HAP-1 (cell line): ENCODE measurements at regions of chr14 and their contacts with region 1.

Region 1: DNA sequence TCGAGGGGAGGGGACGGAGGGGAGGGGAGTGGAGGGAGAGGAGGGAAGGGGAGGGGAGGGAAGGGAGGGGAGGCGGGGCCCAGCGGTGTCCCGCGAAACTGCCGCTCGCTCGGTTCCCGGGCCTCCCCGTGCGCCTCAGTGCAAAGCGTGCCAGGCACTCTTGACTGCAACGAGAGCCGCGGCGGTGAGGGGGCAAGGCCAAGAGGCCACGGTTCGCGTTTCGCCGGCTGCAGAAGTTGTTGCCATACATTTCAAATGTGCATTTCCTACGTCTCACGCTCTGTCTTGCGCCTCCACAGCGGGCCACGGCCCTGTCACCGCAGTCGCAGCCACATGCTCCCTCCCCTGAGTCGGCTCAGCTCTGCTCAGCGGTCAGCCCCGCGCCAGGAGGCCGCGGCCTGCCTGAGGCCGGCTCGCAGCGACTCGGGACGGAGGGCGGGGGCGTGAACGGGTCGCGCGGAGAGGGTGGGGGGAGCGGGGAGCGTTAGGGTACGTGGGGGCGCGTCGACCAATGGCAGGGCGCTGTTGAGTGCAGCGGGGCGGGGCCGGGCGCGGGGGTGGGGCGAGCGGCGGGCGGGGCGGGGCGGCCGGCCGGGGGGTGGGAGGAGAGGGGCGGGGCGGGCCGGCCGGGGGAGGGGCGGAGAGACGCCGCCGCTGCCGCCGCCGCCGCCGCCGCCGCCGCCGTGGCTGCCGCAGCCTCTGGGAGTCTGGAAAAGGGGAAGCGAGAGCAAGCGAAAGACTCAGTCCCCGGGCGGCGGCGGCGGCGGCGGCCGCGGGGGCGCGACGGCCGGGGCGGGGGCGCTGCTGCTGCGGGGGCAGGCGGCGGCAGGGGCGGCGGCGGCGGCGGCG is at the start of gene PPP2R5C:
- DNase-seq: peak; percentile 73 to 95
- H3K4me3 ChIP-seq: peak within 1 kb of the TSS; percentile 63
- H3K4me1 ChIP-seq: peaks cover 7% of the 10 kb centered on the region
- H3K27me3 ChIP-seq: no peaks in the 10 kb centered on the region; the same call in 1 of the 2 replicates

Region 2: DNA sequence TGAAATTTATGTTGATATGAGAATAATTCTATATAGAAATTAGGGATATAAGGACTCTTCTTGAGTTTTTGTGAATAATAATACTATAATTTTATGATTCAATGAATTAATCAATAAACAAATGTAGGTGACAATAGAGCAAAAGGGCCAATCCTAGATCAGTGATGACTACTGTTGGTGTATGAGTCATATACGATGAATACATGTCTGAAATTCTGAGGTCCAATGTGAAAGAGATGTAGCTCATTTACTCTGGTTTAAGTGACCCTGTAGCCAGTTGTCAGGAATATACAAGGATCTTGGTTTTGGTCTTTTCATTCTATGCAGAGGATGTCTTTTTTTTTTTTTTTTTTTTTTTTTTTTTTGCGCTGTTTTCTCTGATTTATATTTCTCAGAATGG is 785.6 kb before region 1 on chr14:
- in situ Hi-C with region 1: no loop called
- DNase-seq: no peak
- H3K4me3 ChIP-seq: no peak overlapping the region
- H3K4me1 ChIP-seq: no peaks in the 10 kb centered on the region
- H3K27me3 ChIP-seq: no peaks in the 10 kb centered on the region

Region 3: DNA sequence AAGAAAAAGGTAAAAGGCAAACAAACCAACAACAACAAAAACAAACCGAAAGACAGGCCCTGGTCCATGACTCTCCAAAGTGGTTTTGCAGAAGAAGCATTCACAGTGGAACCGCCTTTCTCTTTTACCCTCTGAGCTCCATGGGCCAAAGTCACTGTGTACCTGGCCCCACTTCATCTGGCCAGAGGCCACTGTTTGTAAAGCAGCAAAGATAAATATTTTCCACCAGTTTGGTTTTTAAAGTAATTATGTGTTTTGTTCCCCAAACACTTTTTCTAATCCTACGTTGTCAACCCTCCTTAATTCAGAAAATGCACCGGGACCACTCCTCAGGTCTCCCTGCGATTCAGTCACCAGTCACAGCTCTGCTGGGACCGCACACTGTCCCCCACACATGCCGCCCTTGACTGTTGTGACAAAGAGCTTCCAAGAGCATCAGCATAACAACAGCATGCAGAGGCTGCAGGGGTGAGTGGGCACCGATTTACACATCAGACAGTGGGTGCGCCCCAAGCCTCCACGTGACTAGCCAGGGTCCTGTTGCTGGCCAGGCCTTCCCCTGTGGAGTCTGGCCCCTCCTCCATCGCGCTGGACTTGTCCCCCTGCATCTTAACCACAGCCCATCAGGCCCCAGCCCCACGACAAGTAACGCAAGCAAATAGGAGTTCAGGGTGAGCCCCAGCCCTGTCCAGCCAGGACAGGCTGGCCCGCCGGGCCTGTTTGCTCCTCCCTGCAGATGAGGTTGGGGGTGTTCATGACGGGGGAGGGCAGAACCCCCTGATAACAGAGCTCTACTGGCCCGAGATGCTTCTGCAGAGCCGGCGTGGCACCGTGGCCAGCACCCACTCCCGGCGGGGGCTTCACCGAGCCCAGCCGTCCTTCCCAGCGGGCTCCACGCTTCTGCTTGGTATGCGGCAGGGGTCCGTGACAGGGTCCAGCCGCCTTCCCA is 265.2 kb before region 1 on chr14:
- in situ Hi-C with region 1: no loop called
- DNase-seq: no peak
- H3K4me3 ChIP-seq: no peak overlapping the region
- H3K4me1 ChIP-seq: no peaks in the 10 kb centered on the region
- H3K27me3 ChIP-seq: no peaks in the 10 kb centered on the region

Region 4: DNA sequence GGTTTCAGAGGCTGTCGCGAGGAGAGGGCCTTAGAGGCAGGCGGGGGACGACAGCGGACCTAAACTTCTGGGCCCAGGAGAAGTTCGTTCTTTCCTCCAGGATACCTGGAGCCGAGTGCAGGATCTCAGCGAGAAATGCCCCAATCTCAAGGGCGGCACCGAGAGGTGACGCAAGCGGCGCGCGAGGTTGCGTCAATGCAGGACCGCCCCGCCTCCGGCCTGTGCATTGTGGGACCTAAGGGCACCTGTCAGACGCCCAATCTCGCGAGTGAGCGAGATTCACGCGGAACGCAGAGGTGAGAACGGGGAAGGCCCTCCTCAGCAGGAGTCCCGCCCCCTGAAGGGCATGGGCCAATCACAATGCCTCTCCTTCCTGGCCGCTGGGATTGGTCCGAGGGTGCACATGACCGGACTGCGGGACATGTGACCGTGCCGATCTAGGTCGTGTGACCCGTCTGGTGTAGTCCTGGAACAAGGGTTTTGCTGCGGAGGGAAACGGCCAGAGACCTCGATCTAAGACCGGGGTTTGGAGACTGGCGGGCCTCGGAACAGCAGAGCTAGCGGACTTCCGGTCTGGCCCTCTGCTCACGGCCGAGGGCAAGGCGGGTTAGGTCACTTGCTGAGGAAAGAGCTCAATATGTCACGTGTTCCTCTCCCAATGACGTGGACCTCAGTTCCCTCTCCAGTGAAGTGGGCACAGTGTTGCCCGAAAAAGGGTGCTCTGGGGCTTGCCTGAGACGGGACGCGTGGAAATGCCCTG is 186.8 kb after region 1 on chr14:
- in situ Hi-C with region 1: loop called (anchors 10 kb)
- DNase-seq: peak; percentile 99 to 100
- H3K4me3 ChIP-seq: peak overlapping the region; percentile 82
- H3K4me1 ChIP-seq: peaks cover 16% of the 10 kb centered on the region; the same call in 1 of the 2 replicates
- H3K27me3 ChIP-seq: no peaks in the 10 kb centered on the region